ENCODE measurements at regions of chr4 and their contacts with region 1.

Region 1: GRCh38 chr4:149897783-149898182 is 82.1 kb upstream of the IQCM start:
- DNase-seq: no peak
- ATAC-seq: peak; percentile 48; the same call in 1 of the 3 replicates
- H3K4me3 ChIP-seq: no peak overlapping the region
- H3K27ac ChIP-seq: no peak overlapping the region
- H3K4me1 ChIP-seq: no peaks in the 10 kb centered on the region
- H3K27me3 ChIP-seq: no peaks in the 10 kb centered on the region
- CTCF ChIP-seq: peak; percentile 58
- EP300 ChIP-seq: no peak
- POLR2A ChIP-seq: no peak
- RAD21 ChIP-seq: no peak

Region 2: GRCh38 chr4:149370785-149371420 is 526.9 kb before region 1 on chr4:
- CTCF ChIA-PET with region 1: interaction called, 10 read pairs
- POLR2A ChIA-PET with region 1: no interaction called
- in situ Hi-C with region 1: loop called (anchors 10 kb)
- intact Hi-C with region 1: no loop called
- DNase-seq: peak; percentile 34
- ATAC-seq: peak; percentile 80
- H3K4me3 ChIP-seq: no peak overlapping the region
- H3K27ac ChIP-seq: no peak overlapping the region
- H3K4me1 ChIP-seq: no peaks in the 10 kb centered on the region
- H3K27me3 ChIP-seq: no peaks in the 10 kb centered on the region
- CTCF ChIP-seq: peak; percentile 47
- EP300 ChIP-seq: no peak
- POLR2A ChIP-seq: no peak
- RAD21 ChIP-seq: no peak

Region 3: DNA sequence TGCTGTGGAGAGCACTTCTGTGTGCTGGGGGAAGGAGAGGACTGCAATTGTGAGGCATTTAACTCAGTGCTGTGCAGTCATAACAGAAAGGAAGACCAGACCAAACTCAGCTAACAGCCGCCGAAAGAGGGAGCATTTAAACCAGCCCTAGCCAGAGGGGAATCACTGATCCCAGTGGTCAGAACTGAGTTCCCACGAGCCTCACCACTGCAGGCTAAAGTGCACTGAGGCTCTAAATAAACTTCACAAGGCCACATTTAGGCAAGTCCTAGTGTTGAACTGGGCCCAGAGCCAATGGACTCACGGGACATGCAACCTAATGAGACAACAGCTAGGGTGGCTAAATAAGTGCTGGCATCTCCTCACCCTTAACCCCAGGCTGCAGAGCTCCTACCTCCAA is 102.5 kb before region 1 on chr4:
- CTCF ChIA-PET with region 1: no interaction called
- POLR2A ChIA-PET with region 1: no interaction called
- in situ Hi-C with region 1: no loop called
- intact Hi-C with region 1: loop called (anchors 1 kb)
- DNase-seq: peak; percentile 23
- ATAC-seq: peak; percentile 94
- H3K4me3 ChIP-seq: no peak overlapping the region
- H3K27ac ChIP-seq: no peak overlapping the region
- H3K4me1 ChIP-seq: no peaks in the 10 kb centered on the region
- H3K27me3 ChIP-seq: no peaks in the 10 kb centered on the region
- CTCF ChIP-seq: peak; percentile 45
- EP300 ChIP-seq: no peak
- POLR2A ChIP-seq: no peak
- RAD21 ChIP-seq: no peak

Region 4: DNA sequence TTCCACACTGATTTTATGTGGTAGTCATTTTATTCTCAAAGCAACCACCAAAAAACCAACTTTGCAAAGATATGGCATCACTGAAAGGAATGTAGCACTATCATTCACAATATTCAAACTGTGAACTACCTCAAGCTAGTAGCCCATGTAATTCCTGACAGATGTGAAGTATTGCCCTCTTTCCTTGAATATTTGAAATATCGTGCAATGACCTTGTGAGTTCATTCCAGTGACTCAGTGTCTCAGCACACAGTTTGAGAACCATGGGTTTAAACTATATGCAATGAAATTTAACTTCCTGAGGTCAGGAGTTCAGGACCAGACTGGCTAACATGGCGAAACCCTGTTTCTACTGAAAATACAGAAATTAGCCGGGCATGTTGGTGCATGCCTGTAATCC is 61.2 kb before region 1 on chr4:
- CTCF ChIA-PET with region 1: no interaction called
- POLR2A ChIA-PET with region 1: no interaction called
- in situ Hi-C with region 1: no loop called
- intact Hi-C with region 1: no loop called
- DNase-seq: no peak
- ATAC-seq: no peak
- H3K4me3 ChIP-seq: no peak overlapping the region
- H3K27ac ChIP-seq: no peak overlapping the region
- H3K4me1 ChIP-seq: no peaks in the 10 kb centered on the region
- H3K27me3 ChIP-seq: no peaks in the 10 kb centered on the region
- CTCF ChIP-seq: no peak
- EP300 ChIP-seq: no peak
- POLR2A ChIP-seq: no peak
- RAD21 ChIP-seq: no peak

Measured in HepG2 (cell line).